ENCODE measurements at regions of chr7 and their contacts with region 1.

Region 1: GRCh38 chr7:145951566-145951965 is 165.0 kb upstream of the CNTNAP2 start:
- DNase-seq: no peak
- H3K4me3 ChIP-seq: no peak overlapping the region
- H3K27ac ChIP-seq: no peak overlapping the region
- H3K4me1 ChIP-seq: no peaks in the 10 kb centered on the region
- H3K27me3 ChIP-seq: no peaks in the 10 kb centered on the region
- CTCF ChIP-seq: no peak
- POLR2A ChIP-seq: no peak

Region 2: GRCh38 chr7:146002431-146003078 is 51.0 kb after region 1 on chr7:
- intact Hi-C with region 1: loop called (anchors 10 kb)
- DNase-seq: no peak
- H3K4me3 ChIP-seq: no peak overlapping the region
- H3K27ac ChIP-seq: no peak overlapping the region
- H3K4me1 ChIP-seq: no peaks in the 10 kb centered on the region
- H3K27me3 ChIP-seq: no peaks in the 10 kb centered on the region
- CTCF ChIP-seq: no peak
- POLR2A ChIP-seq: no peak